PC-9 (cell line): ENCODE measurements at regions of chr1 and their contacts with region 1.

Region 1: DNA sequence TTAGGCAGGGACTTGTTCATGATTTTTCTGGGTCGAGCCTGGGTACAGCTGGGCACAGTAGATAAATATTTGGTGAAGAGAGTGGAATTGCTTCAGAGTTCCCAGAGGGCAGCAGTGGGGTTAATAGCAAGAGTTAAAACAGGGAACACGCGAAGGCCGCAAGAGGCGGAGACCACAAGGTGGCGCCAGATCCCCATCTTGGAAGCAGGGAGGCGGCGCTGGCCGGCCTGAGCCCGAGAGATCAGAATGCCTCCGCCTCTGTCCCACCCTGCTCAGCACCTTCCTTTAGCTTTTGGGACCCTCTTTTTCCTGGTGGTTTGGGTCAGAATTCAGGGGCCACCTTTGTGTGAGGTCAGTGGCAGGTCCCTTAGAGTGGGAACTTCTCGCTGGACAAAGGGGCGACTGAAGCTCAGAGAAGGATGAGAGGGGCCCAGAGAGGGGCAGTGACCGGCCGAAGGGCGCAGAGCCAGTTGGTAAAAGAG is 6.5 kb upstream of the PADI2 start:
- DNase-seq: peak; percentile 64 to 86
- H3K4me3 ChIP-seq: no peak overlapping the region
- H3K27ac ChIP-seq: peak overlapping the region; percentile 37; the same call in 1 of the 2 replicates
- H3K4me1 ChIP-seq: peaks cover 39% of the 10 kb centered on the region
- H3K27me3 ChIP-seq: no peaks in the 10 kb centered on the region
- CTCF ChIP-seq: peak; percentile 85

Region 2: DNA sequence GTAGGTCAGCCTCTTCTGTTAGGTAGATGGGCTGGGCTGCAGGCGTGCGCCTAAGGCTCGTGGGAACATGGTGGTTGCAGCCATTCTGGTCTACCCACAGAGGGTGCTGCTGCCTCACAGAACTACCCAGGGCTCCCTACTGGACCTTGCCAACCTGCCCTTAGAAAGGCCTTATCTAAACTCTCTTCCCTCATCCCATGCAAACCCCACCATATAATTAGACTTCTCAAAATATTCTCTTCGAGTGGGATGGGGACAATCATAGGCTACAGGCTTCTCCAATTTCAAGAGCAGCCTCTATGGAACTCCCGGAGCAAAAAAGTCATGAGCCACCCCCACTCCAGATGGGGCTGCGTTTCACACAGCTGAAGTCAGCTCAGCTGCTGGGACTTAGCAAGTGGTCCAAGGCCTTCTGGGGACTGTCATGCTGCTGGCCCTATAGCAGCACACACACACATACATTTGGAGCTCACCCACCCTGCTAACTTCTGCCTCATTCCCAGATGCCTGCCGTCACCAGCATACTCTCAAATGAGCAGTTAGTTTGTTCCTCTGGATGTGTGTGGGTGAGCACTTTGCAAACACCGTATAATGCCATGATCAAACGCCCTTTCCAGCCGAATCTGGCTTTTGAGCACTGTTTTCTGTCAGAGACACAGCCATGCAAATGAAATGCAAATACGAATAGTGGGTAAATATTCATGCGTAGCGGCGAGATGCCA is 65.9 kb before region 1 on chr1:
- CTCF ChIA-PET with region 1: no interaction called
- POLR2A ChIA-PET with region 1: no interaction called
- intact Hi-C with region 1: loop called (anchors 2 kb)
- DNase-seq: peak; percentile 66 to 75
- H3K4me3 ChIP-seq: no peak overlapping the region
- H3K27ac ChIP-seq: no peak overlapping the region
- H3K4me1 ChIP-seq: no peaks in the 10 kb centered on the region
- H3K27me3 ChIP-seq: no peaks in the 10 kb centered on the region
- CTCF ChIP-seq: peak; percentile 75

Region 3: GRCh38 chr1:17190010-17190995 is 64.5 kb after region 1 on chr1:
- CTCF ChIA-PET with region 1: no interaction called
- POLR2A ChIA-PET with region 1: no interaction called
- intact Hi-C with region 1: loop called (anchors 1 kb)
- DNase-seq: peak; percentile 90 to 93
- H3K4me3 ChIP-seq: peak overlapping the region; percentile 30
- H3K27ac ChIP-seq: peak overlapping the region; percentile 86
- H3K4me1 ChIP-seq: peaks cover 26% of the 10 kb centered on the region
- H3K27me3 ChIP-seq: no peaks in the 10 kb centered on the region
- CTCF ChIP-seq: no peak

Region 4: DNA sequence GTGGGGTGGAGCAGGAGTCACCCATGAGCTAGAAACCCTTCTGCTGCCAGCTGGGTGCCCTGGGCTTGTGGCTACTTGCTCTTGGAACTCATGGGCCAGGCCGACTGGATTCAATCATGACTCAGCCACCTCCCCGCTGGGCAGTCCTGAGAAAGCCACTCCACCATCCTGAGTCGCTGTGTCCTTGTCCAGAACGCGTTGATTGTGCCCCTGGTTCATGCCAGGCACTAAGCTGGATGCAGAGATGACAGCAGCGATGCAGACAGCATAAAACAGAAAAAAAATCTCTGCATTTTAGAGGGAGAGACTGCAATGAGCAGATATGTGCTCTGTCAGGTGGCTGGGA is 89.7 kb after region 1 on chr1:
- CTCF ChIA-PET with region 1: no interaction called
- POLR2A ChIA-PET with region 1: interaction called, 13 read pairs
- intact Hi-C with region 1: loop called (anchors 1 kb)
- DNase-seq: peak; percentile 64 to 72
- H3K4me3 ChIP-seq: peak overlapping the region; percentile 32; the same call in 1 of the 2 replicates
- H3K27ac ChIP-seq: peak overlapping the region; percentile 95
- H3K4me1 ChIP-seq: peaks cover 63% of the 10 kb centered on the region
- H3K27me3 ChIP-seq: no peaks in the 10 kb centered on the region
- CTCF ChIP-seq: no peak

Region 5: DNA sequence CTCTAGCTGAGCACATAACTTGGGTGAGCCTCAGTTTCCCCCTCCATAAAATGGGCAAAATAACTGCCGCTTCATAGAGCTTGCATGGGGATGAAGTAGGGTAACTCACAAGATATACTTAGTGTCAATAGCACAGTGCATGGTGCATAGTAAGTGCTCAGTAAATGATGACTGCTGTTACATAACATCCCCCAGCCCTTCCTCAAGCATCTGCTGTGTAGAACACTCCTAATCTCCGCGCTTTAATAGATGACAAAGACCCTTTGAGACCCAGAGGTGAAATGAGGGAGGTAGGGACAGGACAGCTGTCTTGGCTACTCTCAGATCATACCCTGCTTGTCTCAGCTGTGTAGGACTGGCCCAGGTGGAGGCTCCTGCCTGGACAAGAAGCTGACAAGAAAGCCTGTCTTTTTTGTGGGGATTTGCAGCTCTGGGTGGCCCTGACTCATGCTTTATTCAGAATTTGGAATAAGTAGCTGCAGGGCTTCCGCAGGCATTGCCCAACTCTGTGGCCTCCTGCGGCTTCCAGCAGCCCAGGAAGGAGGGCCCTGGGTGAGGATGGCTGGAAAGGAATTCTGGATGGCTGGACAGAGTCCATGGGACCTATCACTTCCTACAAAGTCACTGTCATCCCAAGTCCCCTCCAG is 161.5 kb after region 1 on chr1:
- CTCF ChIA-PET with region 1: interaction called, 14 read pairs
- POLR2A ChIA-PET with region 1: no interaction called
- intact Hi-C with region 1: no loop called
- DNase-seq: peak; percentile 78 to 92
- H3K4me3 ChIP-seq: no peak overlapping the region
- H3K27ac ChIP-seq: peak overlapping the region; percentile 25; the same call in 1 of the 2 replicates
- H3K4me1 ChIP-seq: peaks cover 48% of the 10 kb centered on the region
- H3K27me3 ChIP-seq: no peaks in the 10 kb centered on the region
- CTCF ChIP-seq: no peak

Region 6: GRCh38 chr1:17475729-17476128 is 349.9 kb after region 1 on chr1:
- CTCF ChIA-PET with region 1: no interaction called
- POLR2A ChIA-PET with region 1: no interaction called
- intact Hi-C with region 1: loop called (anchors 5 kb)
- DNase-seq: peak; percentile 75 to 90
- H3K4me3 ChIP-seq: no peak overlapping the region
- H3K27ac ChIP-seq: no peak overlapping the region; the same call in 1 of the 2 replicates
- H3K4me1 ChIP-seq: peaks cover 20% of the 10 kb centered on the region
- H3K27me3 ChIP-seq: no peaks in the 10 kb centered on the region
- CTCF ChIP-seq: no peak